CD8-positive, alpha-beta T cell (primary cell): ENCODE measurements at regions of chr11 and their contacts with region 1.

Region 1: DNA sequence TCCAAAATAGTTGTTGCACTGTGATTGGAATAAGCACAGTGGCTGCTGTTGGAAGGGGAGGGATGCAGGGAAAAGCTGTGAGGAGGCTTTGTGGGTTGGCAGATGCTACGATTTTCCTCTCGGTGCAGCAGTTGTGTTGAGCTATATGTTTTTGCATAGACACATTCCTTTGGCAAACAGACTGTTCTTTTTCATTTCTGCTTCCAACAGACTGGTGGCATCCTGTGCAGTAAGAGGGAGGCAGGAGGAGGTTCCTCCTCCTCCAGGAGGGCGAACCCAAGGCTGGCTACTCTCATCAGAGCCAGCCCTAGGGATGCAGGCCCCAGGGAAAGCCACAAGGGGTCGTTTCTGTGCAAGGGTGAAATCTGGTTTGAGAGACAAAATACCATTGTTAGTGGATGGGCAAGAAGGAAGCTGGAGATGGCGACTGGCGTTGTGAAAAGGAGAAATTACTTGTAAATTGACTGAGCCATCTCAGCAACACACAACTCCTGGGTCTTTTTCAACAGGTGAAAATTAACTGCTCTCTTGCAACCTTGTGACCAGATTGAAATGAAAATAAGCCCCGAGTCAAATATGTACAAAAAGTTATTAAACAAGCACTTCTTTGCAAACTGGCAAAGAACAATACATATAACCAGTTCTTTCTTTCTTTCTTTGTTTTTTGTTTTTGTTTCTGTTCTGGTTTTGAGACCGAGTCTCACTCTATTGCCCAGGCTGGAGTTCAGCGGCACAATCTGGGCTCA is 26.5 kb upstream of the UBASH3B start:
- DNase-seq: peak; percentile 46 to 81 (median 71)
- ATAC-seq: peak; percentile 93
- H3K4me3 ChIP-seq: no peak overlapping the region
- H3K4me3 Mint-ChIP-seq: no peak overlapping the region
- H3K27ac ChIP-seq: no peak overlapping the region
- H3K27ac Mint-ChIP-seq: no peak overlapping the region
- H3K4me1 ChIP-seq: no peaks in the 10 kb centered on the region
- H3K4me1 Mint-ChIP-seq: peaks cover 20% of the 10 kb centered on the region
- H3K27me3 ChIP-seq: no peaks in the 10 kb centered on the region
- H3K27me3 Mint-ChIP-seq: no peaks in the 10 kb centered on the region
- CTCF ChIP-seq: peak; percentile 75

Region 2: DNA sequence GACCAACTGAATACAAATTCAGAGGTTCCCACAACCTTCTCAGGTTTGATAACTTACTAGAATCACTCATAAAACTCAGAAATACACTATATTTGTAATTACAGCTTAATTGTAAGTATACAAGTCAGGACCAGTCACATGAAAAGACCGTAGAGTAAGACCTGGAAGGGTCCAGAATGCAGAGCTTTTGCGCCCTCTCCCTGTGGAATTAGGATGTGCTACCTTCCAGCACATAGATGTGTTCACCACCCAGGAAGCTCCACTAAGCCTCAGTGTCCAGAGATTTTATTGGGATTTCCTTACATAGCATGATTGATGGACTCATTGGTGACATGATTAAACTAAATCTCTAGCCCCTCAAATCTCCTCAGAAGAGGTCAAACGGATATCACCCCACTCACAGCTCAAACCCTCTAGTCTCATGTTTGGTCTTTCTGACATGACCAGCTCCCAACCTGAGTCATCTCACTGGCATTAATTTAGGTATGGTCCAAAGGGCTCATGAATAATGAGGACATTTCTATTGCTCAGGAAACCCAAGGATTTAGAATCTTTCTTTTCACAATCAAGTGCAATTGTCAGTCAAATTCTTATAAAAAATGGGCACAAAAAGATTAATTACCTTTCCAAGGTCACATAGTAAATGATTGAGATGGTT is 50.7 kb before region 1 on chr11:
- CTCF ChIA-PET with region 1: interaction called, 3 read pairs
- POLR2A ChIA-PET with region 1: no interaction called
- intact Hi-C with region 1: loop called (anchors 1 to 2 kb)
- DNase-seq: no peak
- ATAC-seq: no peak
- H3K4me3 ChIP-seq: no peak overlapping the region
- H3K4me3 Mint-ChIP-seq: no peak overlapping the region
- H3K27ac ChIP-seq: no peak overlapping the region
- H3K27ac Mint-ChIP-seq: no peak overlapping the region
- H3K4me1 ChIP-seq: peaks cover 4% of the 10 kb centered on the region
- H3K4me1 Mint-ChIP-seq: peaks cover 7% of the 10 kb centered on the region
- H3K27me3 ChIP-seq: no peaks in the 10 kb centered on the region
- H3K27me3 Mint-ChIP-seq: no peaks in the 10 kb centered on the region
- CTCF ChIP-seq: no peak

Region 3: GRCh38 chr11:122655527-122656072 is 26.6 kb after region 1 on chr11 and contains the start of gene UBASH3B:
- CTCF ChIA-PET with region 1: interaction called, 13 read pairs
- POLR2A ChIA-PET with region 1: interaction called, 3 read pairs
- intact Hi-C with region 1: loop called in 1 of 2 experiments (anchors 1 kb)
- DNase-seq: peak; percentile 10 to 75 (median 57)
- ATAC-seq: peak; percentile 72
- H3K4me3 ChIP-seq: peak within 1 kb of the TSS; percentile 96 to 97
- H3K4me3 Mint-ChIP-seq: peak within 1 kb of the TSS; percentile 99
- H3K27ac ChIP-seq: peak within 1 kb of the TSS; percentile 61 to 71
- H3K27ac Mint-ChIP-seq: peak within 1 kb of the TSS; percentile 93
- H3K4me1 ChIP-seq: peaks cover 44% of the 10 kb centered on the region
- H3K4me1 Mint-ChIP-seq: peaks cover 46% of the 10 kb centered on the region
- H3K27me3 ChIP-seq: peaks cover 0 to 2% of the 10 kb centered on the region in 2 experiments
- H3K27me3 Mint-ChIP-seq: no peaks in the 10 kb centered on the region
- CTCF ChIP-seq: no peak
- total RNA-seq, gene UBASH3B: 16.7 to 19.3 TPM

Region 4: GRCh38 chr11:122673701-122674100 is 44.7 kb after region 1 on chr11:
- CTCF ChIA-PET with region 1: interaction called, 15 read pairs
- POLR2A ChIA-PET with region 1: interaction called, 4 read pairs
- intact Hi-C with region 1: no loop called
- DNase-seq: peak in 1 of 9 experiments; percentile 32
- ATAC-seq: no peak
- H3K4me3 ChIP-seq: no peak overlapping the region
- H3K4me3 Mint-ChIP-seq: no peak overlapping the region
- H3K27ac ChIP-seq: no peak overlapping the region
- H3K27ac Mint-ChIP-seq: peak overlapping the region; percentile 39
- H3K4me1 ChIP-seq: peaks cover 73% of the 10 kb centered on the region
- H3K4me1 Mint-ChIP-seq: peaks cover 82% of the 10 kb centered on the region
- H3K27me3 ChIP-seq: no peaks in the 10 kb centered on the region
- H3K27me3 Mint-ChIP-seq: no peaks in the 10 kb centered on the region
- CTCF ChIP-seq: no peak

Region 5: DNA sequence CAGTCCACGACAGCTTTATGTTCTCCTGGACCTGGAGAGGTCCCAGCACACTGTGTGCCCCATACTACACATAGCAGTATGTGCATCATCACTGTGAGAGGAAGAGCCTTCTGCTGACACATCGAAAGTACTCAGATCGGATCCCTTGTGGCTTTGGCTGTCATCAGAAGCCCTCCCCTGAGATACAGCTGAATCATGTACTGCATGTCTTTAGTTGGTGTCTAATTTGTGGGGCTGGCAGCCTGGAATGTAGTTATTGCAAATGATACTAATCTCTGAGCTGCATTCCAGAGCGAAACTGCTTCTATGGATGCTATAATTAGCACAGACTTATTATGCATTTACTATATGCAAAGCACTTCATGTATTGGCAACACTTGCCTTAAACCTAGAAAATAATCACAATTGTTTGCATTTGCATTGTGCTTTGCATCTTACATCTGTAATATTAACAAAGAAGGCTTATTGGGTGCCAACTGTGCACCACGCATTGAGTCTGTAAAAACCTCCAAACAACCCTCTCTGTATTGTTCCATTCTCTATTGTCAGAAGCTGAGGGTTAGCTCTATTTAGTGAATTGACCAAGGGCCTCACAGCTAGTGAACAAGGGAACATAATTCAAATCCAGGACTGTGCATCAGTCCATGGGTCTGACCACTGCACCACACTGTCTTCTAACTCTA is 120.2 kb after region 1 on chr11:
- CTCF ChIA-PET with region 1: interaction called, 517 read pairs
- POLR2A ChIA-PET with region 1: interaction called, 11 read pairs
- intact Hi-C with region 1: loop called in 1 of 2 experiments (anchors 1 kb)
- DNase-seq: peak in 8 of 9 experiments; percentile 25 to 67 (median 51)
- ATAC-seq: peak; percentile 52
- H3K4me3 ChIP-seq: no peak overlapping the region
- H3K4me3 Mint-ChIP-seq: no peak overlapping the region
- H3K27ac ChIP-seq: no peak overlapping the region
- H3K27ac Mint-ChIP-seq: peak overlapping the region; percentile 71
- H3K4me1 ChIP-seq: peaks cover 60% of the 10 kb centered on the region
- H3K4me1 Mint-ChIP-seq: peaks cover 36% of the 10 kb centered on the region
- H3K27me3 ChIP-seq: no peaks in the 10 kb centered on the region
- H3K27me3 Mint-ChIP-seq: no peaks in the 10 kb centered on the region
- CTCF ChIP-seq: no peak

Region 6: DNA sequence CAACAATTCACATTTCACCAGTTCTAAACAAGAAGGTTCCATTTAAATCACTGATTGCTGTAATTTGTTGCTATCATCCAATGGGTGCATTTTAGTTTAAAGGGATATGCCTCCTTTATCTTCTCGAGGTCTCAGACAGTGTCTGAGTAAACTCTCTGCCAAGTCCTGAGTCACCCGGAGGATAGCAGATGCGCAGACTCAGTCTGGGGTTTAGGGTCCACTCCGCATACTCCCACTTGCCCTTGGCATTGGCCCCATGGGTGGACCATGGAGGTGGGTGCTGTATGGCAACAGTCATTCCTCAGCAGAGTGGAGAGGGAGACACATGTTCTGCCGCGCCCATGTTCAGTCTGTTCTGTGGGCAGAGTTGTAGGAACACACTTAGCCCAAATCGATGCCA is 144.0 kb after region 1 on chr11:
- CTCF ChIA-PET with region 1: interaction called, 405 read pairs
- POLR2A ChIA-PET with region 1: interaction called, 4 read pairs
- intact Hi-C with region 1: no loop called
- DNase-seq: no peak
- ATAC-seq: no peak
- H3K4me3 ChIP-seq: no peak overlapping the region
- H3K4me3 Mint-ChIP-seq: no peak overlapping the region
- H3K27ac ChIP-seq: no peak overlapping the region
- H3K27ac Mint-ChIP-seq: no peak overlapping the region
- H3K4me1 ChIP-seq: no peaks in the 10 kb centered on the region
- H3K4me1 Mint-ChIP-seq: peaks cover 30% of the 10 kb centered on the region
- H3K27me3 ChIP-seq: no peaks in the 10 kb centered on the region
- H3K27me3 Mint-ChIP-seq: no peaks in the 10 kb centered on the region
- CTCF ChIP-seq: no peak

Region 7: DNA sequence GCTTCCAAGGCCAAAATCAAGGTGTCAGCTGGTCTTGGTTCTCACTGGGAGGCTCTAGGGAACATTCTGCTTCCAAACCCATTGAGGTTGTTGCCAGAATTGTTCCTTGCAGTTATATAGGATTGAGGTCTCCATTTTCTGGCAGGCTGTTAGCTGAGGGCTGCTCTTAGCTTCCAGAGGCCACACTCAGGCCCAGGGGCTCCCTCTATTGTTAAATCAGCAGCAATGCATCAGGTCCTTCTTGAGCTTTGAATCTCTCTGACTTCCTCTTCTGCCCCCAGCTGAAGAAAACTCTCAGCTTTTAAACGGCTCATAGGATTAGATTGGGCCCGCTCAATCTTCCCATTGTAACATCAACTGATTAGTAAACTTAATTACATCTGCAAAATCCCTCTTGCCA is 392.0 kb after region 1 on chr11:
- CTCF ChIA-PET with region 1: interaction called, 7 read pairs
- POLR2A ChIA-PET with region 1: no interaction called
- intact Hi-C with region 1: loop called (anchors 5 to 10 kb)
- DNase-seq: peak in 5 of 9 experiments; percentile 5 to 61 (median 20)
- ATAC-seq: peak; percentile 77
- H3K4me3 ChIP-seq: no peak overlapping the region
- H3K4me3 Mint-ChIP-seq: no peak overlapping the region
- H3K27ac ChIP-seq: no peak overlapping the region
- H3K27ac Mint-ChIP-seq: no peak overlapping the region
- H3K4me1 ChIP-seq: no peaks in the 10 kb centered on the region
- H3K4me1 Mint-ChIP-seq: peaks cover 7% of the 10 kb centered on the region
- H3K27me3 ChIP-seq: peaks cover 0 to 2% of the 10 kb centered on the region in 2 experiments
- H3K27me3 Mint-ChIP-seq: peaks cover 2% of the 10 kb centered on the region
- CTCF ChIP-seq: peak; percentile 55

Region 8: GRCh38 chr11:123100379-123101085 is 471.5 kb after region 1 on chr11:
- CTCF ChIA-PET with region 1: no interaction called
- POLR2A ChIA-PET with region 1: no interaction called
- intact Hi-C with region 1: no loop called
- DNase-seq: no peak
- ATAC-seq: no peak
- H3K4me3 ChIP-seq: no peak overlapping the region
- H3K4me3 Mint-ChIP-seq: peak overlapping the region; percentile 58
- H3K27ac ChIP-seq: no peak overlapping the region
- H3K27ac Mint-ChIP-seq: peak overlapping the region; percentile 69
- H3K4me1 ChIP-seq: peaks cover 14% of the 10 kb centered on the region
- H3K4me1 Mint-ChIP-seq: peaks cover 27% of the 10 kb centered on the region
- H3K27me3 ChIP-seq: no peaks in the 10 kb centered on the region
- H3K27me3 Mint-ChIP-seq: no peaks in the 10 kb centered on the region
- CTCF ChIP-seq: no peak